B cell (primary cell): ENCODE measurements at regions of chr20 and their contacts with region 1.

Region 1: DNA sequence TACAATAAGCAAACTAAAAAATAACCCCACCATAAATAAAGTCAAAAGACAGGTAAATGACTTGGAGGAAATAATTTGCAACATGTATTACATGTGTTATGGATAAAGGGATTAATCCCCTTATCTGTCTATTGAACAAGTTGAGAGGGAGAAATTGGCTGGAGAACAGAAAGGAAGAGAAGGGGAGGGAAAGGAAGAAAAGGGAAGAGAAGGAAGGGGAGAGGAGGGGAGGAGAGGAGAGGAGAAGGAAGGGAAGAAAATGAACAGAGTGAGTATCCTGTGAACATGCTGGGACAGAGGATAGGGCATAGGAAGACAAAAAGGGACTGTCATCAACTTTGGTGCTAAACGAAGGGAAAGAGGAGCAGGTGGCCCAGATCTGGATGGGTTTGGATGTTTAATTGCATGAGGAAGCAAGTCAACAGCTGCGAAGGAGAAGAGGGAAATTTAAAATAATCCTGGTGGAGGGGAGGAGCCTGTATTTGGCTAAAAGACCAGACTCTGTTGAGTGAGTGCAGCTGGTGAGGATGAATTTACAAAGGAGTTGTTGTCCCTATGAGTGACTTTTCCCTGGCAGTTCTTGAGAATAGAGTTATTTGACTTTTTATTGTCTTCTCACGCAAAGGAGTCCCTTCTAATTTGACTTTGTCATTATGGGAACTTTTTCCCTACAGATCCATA is 14.2 kb upstream of the SHLD1 start:
- DNase-seq: no peak
- ATAC-seq: no peak
- H3K4me3 ChIP-seq: no peak overlapping the region
- H3K4me3 Mint-ChIP-seq: no peak overlapping the region
- H3K27ac ChIP-seq: no peak overlapping the region
- H3K27ac Mint-ChIP-seq: peak overlapping the region; percentile 41
- H3K4me1 ChIP-seq: peaks cover 17 to 18% of the 10 kb centered on the region in 2 donors
- H3K4me1 Mint-ChIP-seq: peaks cover 25% of the 10 kb centered on the region
- H3K27me3 ChIP-seq: peaks cover 0 to 74% (median 49%) of the 10 kb centered on the region in 4 experiments
- H3K27me3 Mint-ChIP-seq: peaks cover 65% of the 10 kb centered on the region
- CTCF ChIP-seq: no peak

Region 2: DNA sequence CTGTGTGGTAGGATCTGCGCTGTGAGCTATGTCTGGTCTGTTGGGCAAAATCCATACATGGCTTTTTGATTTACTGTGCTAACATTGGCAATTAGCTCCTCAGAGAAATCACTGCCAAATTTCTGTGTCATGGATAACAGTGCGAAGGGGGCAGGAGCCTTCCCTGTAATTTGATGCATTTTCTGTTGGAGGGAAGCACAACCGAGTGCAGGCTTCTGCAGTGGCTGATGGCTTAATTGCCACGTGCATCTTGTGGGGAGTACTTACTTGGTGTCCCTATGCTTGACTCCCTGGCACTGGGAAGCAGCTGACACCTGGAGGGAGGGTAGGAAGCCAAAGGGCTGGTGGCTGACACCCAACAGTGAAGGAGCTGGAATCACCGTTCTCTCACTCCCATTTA is 319.9 kb before region 1 on chr20:
- CTCF ChIA-PET with region 1: no interaction called
- POLR2A ChIA-PET with region 1: no interaction called
- intact Hi-C with region 1: no loop called
- DNase-seq: no peak
- ATAC-seq: no peak
- H3K4me3 ChIP-seq: no peak overlapping the region
- H3K4me3 Mint-ChIP-seq: no peak overlapping the region
- H3K27ac ChIP-seq: no peak overlapping the region
- H3K27ac Mint-ChIP-seq: no peak overlapping the region
- H3K4me1 ChIP-seq: no peaks in the 10 kb centered on the region
- H3K4me1 Mint-ChIP-seq: no peaks in the 10 kb centered on the region
- H3K27me3 ChIP-seq: peaks cover 0 to 3% (median 0%) of the 10 kb centered on the region in 4 experiments
- H3K27me3 Mint-ChIP-seq: peaks cover 13% of the 10 kb centered on the region
- CTCF ChIP-seq: no peak

Region 3: GRCh38 chr20:5608442-5609161 is 127.4 kb before region 1 on chr20:
- CTCF ChIA-PET with region 1: no interaction called
- POLR2A ChIA-PET with region 1: no interaction called
- intact Hi-C with region 1: no loop called
- DNase-seq: peak; percentile 32
- ATAC-seq: no peak
- H3K4me3 ChIP-seq: peak overlapping the region; percentile 70 to 98 (median 85)
- H3K4me3 Mint-ChIP-seq: peak overlapping the region; percentile 97
- H3K27ac ChIP-seq: peak overlapping the region; percentile 93 to 95
- H3K27ac Mint-ChIP-seq: peak overlapping the region; percentile 82
- H3K4me1 ChIP-seq: peaks cover 57% of the 10 kb centered on the region in 2 donors
- H3K4me1 Mint-ChIP-seq: peaks cover 58% of the 10 kb centered on the region
- H3K27me3 ChIP-seq: no peaks in the 10 kb centered on the region
- H3K27me3 Mint-ChIP-seq: no peaks in the 10 kb centered on the region
- CTCF ChIP-seq: no peak

Region 4: DNA sequence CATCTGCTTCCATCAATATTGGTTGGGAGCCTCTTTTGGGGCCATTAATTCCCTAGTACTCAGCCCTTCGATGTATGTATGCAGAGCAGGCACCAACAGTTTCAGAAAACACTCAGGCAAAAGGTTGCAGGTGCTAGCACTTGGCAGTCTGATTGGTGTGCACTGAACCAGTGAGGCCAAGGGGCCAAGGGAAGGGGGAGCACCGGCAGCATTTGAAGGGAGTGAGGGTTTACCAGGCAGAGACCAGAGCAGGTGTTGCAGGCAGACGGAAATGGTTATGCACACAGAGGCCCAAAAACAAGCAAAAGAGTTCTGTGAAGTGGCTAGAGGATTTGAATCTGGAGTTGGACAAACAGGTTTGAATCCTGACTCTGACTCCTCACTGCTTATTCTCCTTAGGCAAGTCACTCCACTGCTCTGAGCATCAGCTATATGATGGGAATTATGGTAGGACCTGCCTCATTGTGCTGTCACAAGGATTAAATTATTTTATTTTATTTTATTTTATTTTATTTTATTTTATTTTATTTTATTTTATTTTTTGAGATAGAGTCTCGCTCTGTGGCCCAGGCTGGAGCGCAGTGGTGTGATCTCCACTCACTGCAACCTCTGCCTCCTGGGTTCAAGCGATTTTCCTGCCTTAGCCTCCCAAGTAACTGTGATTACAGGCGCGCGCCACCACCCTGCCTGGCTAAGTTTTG is 43.9 kb before region 1 on chr20:
- CTCF ChIA-PET with region 1: no interaction called
- POLR2A ChIA-PET with region 1: no interaction called
- intact Hi-C with region 1: loop called (anchors 5 kb)
- DNase-seq: peak; percentile 83
- ATAC-seq: peak; percentile 100
- H3K4me3 ChIP-seq: peak overlapping the region in 1 of 5 experiments; percentile 14
- H3K4me3 Mint-ChIP-seq: peak overlapping the region; percentile 69
- H3K27ac ChIP-seq: peak overlapping the region in 1 of 2 donors; percentile 25
- H3K27ac Mint-ChIP-seq: peak overlapping the region; percentile 86
- H3K4me1 ChIP-seq: peaks cover 30 to 40% of the 10 kb centered on the region in 2 donors
- H3K4me1 Mint-ChIP-seq: peaks cover 18% of the 10 kb centered on the region
- H3K27me3 ChIP-seq: no peaks in the 10 kb centered on the region
- H3K27me3 Mint-ChIP-seq: no peaks in the 10 kb centered on the region
- CTCF ChIP-seq: no peak

Region 5: GRCh38 chr20:5757949-5758348 is 22.0 kb after region 1 on chr20:
- CTCF ChIA-PET with region 1: no interaction called
- POLR2A ChIA-PET with region 1: no interaction called
- intact Hi-C with region 1: no loop called
- DNase-seq: no peak
- ATAC-seq: no peak
- H3K4me3 ChIP-seq: no peak overlapping the region
- H3K4me3 Mint-ChIP-seq: no peak overlapping the region
- H3K27ac ChIP-seq: no peak overlapping the region
- H3K27ac Mint-ChIP-seq: no peak overlapping the region
- H3K4me1 ChIP-seq: peaks cover 8 to 20% of the 10 kb centered on the region in 2 donors
- H3K4me1 Mint-ChIP-seq: peaks cover 36% of the 10 kb centered on the region
- H3K27me3 ChIP-seq: no peaks in the 10 kb centered on the region
- H3K27me3 Mint-ChIP-seq: no peaks in the 10 kb centered on the region
- CTCF ChIP-seq: no peak